Right lobe of liver (tissue), 6 donors: ENCODE measurements at regions of chr6 and their contacts with region 1.

Region 1: GRCh38 chr6:105097288-105097687 is 82.5 kb downstream of the POPDC3 start:
- DNase-seq: no peak
- ATAC-seq: no peak
- H3K4me3 ChIP-seq: no peak overlapping the region
- H3K27ac ChIP-seq: no peak overlapping the region
- H3K4me1 ChIP-seq: no peaks in the 10 kb centered on the region
- H3K27me3 ChIP-seq: no peaks in the 10 kb centered on the region
- CTCF ChIP-seq: no peak
- POLR2A ChIP-seq: no peak

Region 2: GRCh38 chr6:105209950-105210706 is 112.8 kb after region 1 on chr6:
- intact Hi-C with region 1: no loop called
- DNase-seq: no peak
- ATAC-seq: peak in 2 of 4 donors; percentile 43 to 66
- H3K4me3 ChIP-seq: no peak overlapping the region
- H3K27ac ChIP-seq: no peak overlapping the region
- H3K4me1 ChIP-seq: no peaks in the 10 kb centered on the region
- H3K27me3 ChIP-seq: no peaks in the 10 kb centered on the region
- CTCF ChIP-seq: no peak
- POLR2A ChIP-seq: no peak

Region 3: GRCh38 chr6:105301072-105301503 is 203.8 kb after region 1 on chr6:
- intact Hi-C with region 1: loop called in 1 of 2 experiments (anchors 5 kb)
- DNase-seq: no peak
- ATAC-seq: no peak
- H3K4me3 ChIP-seq: no peak overlapping the region
- H3K27ac ChIP-seq: no peak overlapping the region
- H3K4me1 ChIP-seq: no peaks in the 10 kb centered on the region
- H3K27me3 ChIP-seq: no peaks in the 10 kb centered on the region
- CTCF ChIP-seq: no peak
- POLR2A ChIP-seq: no peak

Region 4: DNA sequence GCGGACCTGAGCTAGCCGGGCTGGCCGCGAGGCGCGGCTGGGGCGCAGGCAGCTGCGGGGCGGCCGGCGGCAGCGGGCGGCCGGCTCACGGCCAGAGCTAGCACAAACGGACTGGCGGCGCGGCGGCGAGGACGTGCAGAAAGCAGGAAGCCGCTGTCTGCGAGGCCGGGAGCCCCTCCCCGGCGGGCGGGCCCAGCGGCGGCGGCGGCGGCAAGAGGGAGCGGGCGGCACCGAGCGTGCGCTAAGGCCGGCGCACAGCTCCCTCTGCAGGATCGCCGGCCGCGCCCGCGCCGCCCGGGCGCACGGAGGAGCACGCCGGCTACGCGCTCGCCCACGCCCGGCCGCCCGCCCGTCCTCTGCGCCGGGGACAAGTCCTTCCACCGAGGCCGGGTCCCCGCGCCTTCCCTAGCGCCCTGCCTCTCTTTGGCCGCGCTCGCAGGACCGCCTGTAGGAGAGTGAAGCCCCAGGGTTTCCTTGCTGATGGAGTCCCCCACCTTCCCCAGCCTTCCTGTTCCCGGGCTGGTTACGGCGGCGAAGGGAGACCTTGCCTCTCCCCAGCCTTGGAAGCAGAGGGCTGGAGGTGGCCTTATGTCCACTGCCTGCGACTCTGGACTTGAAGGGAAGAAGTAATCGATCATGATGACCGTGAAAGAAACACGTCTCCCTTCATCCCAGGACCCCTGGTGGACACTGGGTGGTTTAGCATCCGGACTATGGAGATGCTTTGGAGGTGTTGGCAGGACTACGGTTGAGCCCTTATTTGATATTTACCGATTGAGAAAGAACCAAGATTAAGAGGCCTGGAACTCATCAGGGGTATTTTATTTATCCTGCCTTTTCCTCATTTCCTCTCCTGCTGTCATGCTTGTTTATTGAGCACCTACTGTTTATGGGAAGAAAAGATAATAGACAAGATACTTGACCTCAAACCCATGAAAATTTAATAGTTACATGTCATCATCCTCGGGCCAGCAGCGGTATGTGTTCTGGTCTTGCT is 305.9 kb after region 1 on chr6 and contains the start of gene PREP:
- intact Hi-C with region 1: loop called (anchors 10 kb)
- DNase-seq: peak; percentile 92 to 93 (median 93)
- ATAC-seq: peak; percentile 92 to 98 (median 95)
- H3K4me3 ChIP-seq: peak within 1 kb of the TSS; percentile 89 to 98 (median 92)
- H3K27ac ChIP-seq: peak within 1 kb of the TSS; percentile 75 to 81 (median 76)
- H3K4me1 ChIP-seq: peaks cover 0 to 18% (median 2%) of the 10 kb centered on the region in 4 donors
- H3K27me3 ChIP-seq: no peaks in the 10 kb centered on the region
- CTCF ChIP-seq: peak; percentile 53 to 72 (median 66)
- POLR2A ChIP-seq: peak; percentile 92
- total RNA-seq, gene PREP: 14.8 to 18.8 (median 16.7) TPM